BJ (cell line): ENCODE measurements at regions of chr13 and their contacts with region 1.

Region 1: GRCh38 chr13:45310341-45311125 is 30.4 kb downstream of the TPT1 start:
- DNase-seq: no peak
- H3K4me3 ChIP-seq: no peak overlapping the region; the same call in 1 of the 2 replicates
- H3K27me3 ChIP-seq: no peaks in the 10 kb centered on the region; the same call in 1 of the 2 replicates
- CTCF ChIP-seq: no peak

Region 2: DNA sequence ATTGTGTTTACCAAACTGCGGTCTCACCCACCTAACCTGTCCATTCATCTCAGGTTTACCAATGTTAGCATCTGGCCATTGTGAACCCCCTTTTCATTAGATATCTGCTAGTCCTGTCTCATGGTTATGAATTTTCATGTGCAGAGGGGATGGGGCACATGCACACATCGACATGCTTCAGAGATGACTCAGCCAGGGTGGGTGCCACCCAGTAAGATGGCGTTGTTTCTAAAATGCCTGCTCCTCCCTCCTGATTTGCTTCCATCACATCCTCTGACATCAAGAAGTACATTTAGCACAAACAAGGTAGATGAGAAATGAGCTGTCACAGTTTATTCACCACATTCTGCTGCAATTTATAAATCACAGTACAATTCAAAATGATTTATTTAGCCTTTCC is 269.9 kb before region 1 on chr13:
- CTCF ChIA-PET with region 1: interaction called, 20 read pairs
- POLR2A ChIA-PET with region 1: no interaction called
- DNase-seq: no peak
- H3K4me3 ChIP-seq: no peak overlapping the region
- H3K27me3 ChIP-seq: no peaks in the 10 kb centered on the region
- CTCF ChIP-seq: no peak

Region 3: GRCh38 chr13:45063261-45063860 is 247.2 kb before region 1 on chr13:
- CTCF ChIA-PET with region 1: no interaction called
- POLR2A ChIA-PET with region 1: no interaction called
- DNase-seq: no peak
- H3K4me3 ChIP-seq: no peak overlapping the region
- H3K27me3 ChIP-seq: 0 out of 2 replicates have a peak, but pooled peaks cover 4% of the 10 kb centered on the region
- CTCF ChIP-seq: no peak

Region 4: GRCh38 chr13:45297456-45298205 is 12.9 kb before region 1 on chr13:
- CTCF ChIA-PET with region 1: interaction called, 21 read pairs
- POLR2A ChIA-PET with region 1: no interaction called
- DNase-seq: no peak
- H3K4me3 ChIP-seq: no peak overlapping the region
- H3K27me3 ChIP-seq: no peaks in the 10 kb centered on the region
- CTCF ChIP-seq: no peak